ENCODE measurements at regions of chr22 and their contacts with region 1.

Region 1: GRCh38 chr22:20156611-20157429 is 6.0 kb upstream of the CCDC188 start:
- DNase-seq: peak; percentile 88
- ATAC-seq: peak; percentile 91
- H3K4me3 ChIP-seq: no peak overlapping the region
- H3K4me3 Mint-ChIP-seq: no peak overlapping the region
- H3K27ac ChIP-seq: no peak overlapping the region
- H3K27ac Mint-ChIP-seq: peak overlapping the region; percentile 10
- H3K4me1 ChIP-seq: peaks cover 0 to 3% of the 10 kb centered on the region in 2 donors
- H3K4me1 Mint-ChIP-seq: peaks cover 2% of the 10 kb centered on the region
- H3K27me3 ChIP-seq: peaks cover 0 to 40% (median 10%) of the 10 kb centered on the region in 4 experiments
- H3K27me3 Mint-ChIP-seq: peaks cover 10% of the 10 kb centered on the region
- CTCF ChIP-seq: peak; percentile 95

Region 2: GRCh38 chr22:19912271-19912999 is 244.4 kb before region 1 on chr22:
- CTCF ChIA-PET with region 1: no interaction called
- POLR2A ChIA-PET with region 1: no interaction called
- intact Hi-C with region 1: no loop called
- DNase-seq: no peak
- ATAC-seq: no peak
- H3K4me3 ChIP-seq: no peak overlapping the region
- H3K4me3 Mint-ChIP-seq: no peak overlapping the region
- H3K27ac ChIP-seq: no peak overlapping the region
- H3K27ac Mint-ChIP-seq: no peak overlapping the region
- H3K4me1 ChIP-seq: no peaks in the 10 kb centered on the region
- H3K4me1 Mint-ChIP-seq: peaks cover 1% of the 10 kb centered on the region
- H3K27me3 ChIP-seq: no peaks in the 10 kb centered on the region
- H3K27me3 Mint-ChIP-seq: no peaks in the 10 kb centered on the region
- CTCF ChIP-seq: no peak

Region 3: GRCh38 chr22:20174785-20175596 is 18.2 kb after region 1 on chr22:
- CTCF ChIA-PET with region 1: no interaction called
- POLR2A ChIA-PET with region 1: no interaction called
- intact Hi-C with region 1: no loop called
- DNase-seq: no peak
- ATAC-seq: no peak
- H3K4me3 ChIP-seq: no peak overlapping the region
- H3K4me3 Mint-ChIP-seq: no peak overlapping the region
- H3K27ac ChIP-seq: no peak overlapping the region
- H3K27ac Mint-ChIP-seq: no peak overlapping the region
- H3K4me1 ChIP-seq: no peaks in the 10 kb centered on the region
- H3K4me1 Mint-ChIP-seq: no peaks in the 10 kb centered on the region
- H3K27me3 ChIP-seq: no peaks in the 10 kb centered on the region
- H3K27me3 Mint-ChIP-seq: peaks cover 3% of the 10 kb centered on the region
- CTCF ChIP-seq: no peak

Region 4: DNA sequence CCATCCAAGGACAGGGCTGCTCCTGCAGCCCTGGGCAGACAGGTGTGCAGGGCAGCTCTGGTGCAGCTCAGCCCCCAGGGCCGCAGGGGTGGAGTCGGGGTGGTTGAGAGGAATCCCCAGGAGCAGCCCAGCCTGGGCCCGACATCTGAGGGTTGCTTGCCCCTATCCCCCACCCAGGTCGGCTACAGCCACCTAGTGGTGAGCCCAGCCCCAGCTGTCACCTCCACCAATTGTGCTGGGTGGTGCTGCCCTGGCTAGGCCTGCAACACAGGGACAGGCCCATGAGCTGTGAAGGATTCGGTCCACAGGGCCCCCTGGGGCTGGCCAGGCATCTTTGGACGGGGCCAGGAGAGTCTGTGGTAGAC is 81.7 kb after region 1 on chr22:
- CTCF ChIA-PET with region 1: interaction called, 19 read pairs
- POLR2A ChIA-PET with region 1: no interaction called
- intact Hi-C with region 1: no loop called
- DNase-seq: peak; percentile 69
- ATAC-seq: peak; percentile 85
- H3K4me3 ChIP-seq: peak overlapping the region in 1 of 5 experiments; percentile 25
- H3K4me3 Mint-ChIP-seq: peak overlapping the region; percentile 39
- H3K27ac ChIP-seq: peak overlapping the region in 1 of 2 donors; percentile 40
- H3K27ac Mint-ChIP-seq: peak overlapping the region; percentile 67
- H3K4me1 ChIP-seq: peaks cover 22 to 36% of the 10 kb centered on the region in 2 donors
- H3K4me1 Mint-ChIP-seq: peaks cover 21% of the 10 kb centered on the region
- H3K27me3 ChIP-seq: peaks cover 0 to 2% (median 0%) of the 10 kb centered on the region in 4 experiments
- H3K27me3 Mint-ChIP-seq: no peaks in the 10 kb centered on the region
- CTCF ChIP-seq: peak; percentile 53

Region 5: DNA sequence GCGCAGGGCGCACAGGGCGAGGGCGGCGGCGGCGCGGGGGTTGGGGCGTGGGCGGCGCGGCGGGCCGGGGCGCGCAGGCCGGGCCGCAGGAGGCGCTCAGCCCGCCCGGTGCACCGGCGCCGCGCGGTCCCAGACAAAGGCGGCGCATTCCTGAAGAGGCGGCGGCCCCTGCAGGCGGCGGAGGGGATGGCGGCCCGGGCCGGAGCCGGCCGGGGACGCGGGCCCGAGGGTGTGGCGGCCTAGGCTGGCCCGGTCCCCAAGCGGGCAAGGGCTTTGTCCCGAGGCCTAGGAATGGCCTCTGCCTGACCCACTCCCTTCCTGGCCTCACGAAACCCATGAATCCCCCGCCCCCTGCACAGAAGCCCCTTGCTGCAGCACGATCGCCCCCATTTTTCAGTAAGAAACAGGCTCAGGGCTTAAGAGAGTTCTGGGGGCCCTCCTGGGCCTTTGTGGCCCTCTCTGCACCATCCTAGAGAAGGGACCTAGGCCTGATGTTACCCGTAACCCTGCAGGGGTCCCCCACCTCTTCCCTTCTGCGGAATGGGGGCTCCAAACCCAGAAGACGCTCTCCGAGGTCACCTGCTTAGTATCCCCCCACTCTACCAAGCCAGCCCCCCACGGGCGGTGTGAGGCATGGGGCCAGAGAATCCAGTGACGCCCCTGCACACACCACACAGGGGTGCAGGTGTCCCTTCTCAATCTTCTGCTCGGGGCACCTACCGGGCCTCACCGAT is 111.6 kb after region 1 on chr22 and contains the start of gene RTN4R:
- CTCF ChIA-PET with region 1: interaction called, 10 read pairs
- POLR2A ChIA-PET with region 1: no interaction called
- intact Hi-C with region 1: loop called (anchors 1 kb)
- DNase-seq: peak; percentile 68
- ATAC-seq: peak; percentile 89
- H3K4me3 ChIP-seq: peak within 1 kb of the TSS in 2 of 5 experiments; percentile 25 to 33
- H3K4me3 Mint-ChIP-seq: peak within 1 kb of the TSS; percentile 75
- H3K27ac ChIP-seq: no peak within 1 kb of the TSS
- H3K27ac Mint-ChIP-seq: no peak within 1 kb of the TSS
- H3K4me1 ChIP-seq: peaks cover 8 to 14% of the 10 kb centered on the region in 2 donors
- H3K4me1 Mint-ChIP-seq: peaks cover 5% of the 10 kb centered on the region
- H3K27me3 ChIP-seq: peaks cover 0 to 9% (median 3%) of the 10 kb centered on the region in 4 experiments
- H3K27me3 Mint-ChIP-seq: peaks cover 3% of the 10 kb centered on the region
- CTCF ChIP-seq: peak; percentile 61
- total RNA-seq, gene RTN4R: 0.42 and 0.51 TPM in 2 replicates

Region 6: GRCh38 chr22:20283674-20284066 is 126.8 kb after region 1 on chr22:
- CTCF ChIA-PET with region 1: interaction called, 31 read pairs
- POLR2A ChIA-PET with region 1: no interaction called
- intact Hi-C with region 1: no loop called
- DNase-seq: no peak
- ATAC-seq: no peak
- H3K4me3 ChIP-seq: no peak overlapping the region
- H3K4me3 Mint-ChIP-seq: no peak overlapping the region
- H3K27ac ChIP-seq: no peak overlapping the region
- H3K27ac Mint-ChIP-seq: no peak overlapping the region
- H3K4me1 ChIP-seq: peaks cover 0 to 3% of the 10 kb centered on the region in 2 donors
- H3K4me1 Mint-ChIP-seq: peaks cover 4% of the 10 kb centered on the region
- H3K27me3 ChIP-seq: peaks cover 0 to 4% (median 0%) of the 10 kb centered on the region in 4 experiments
- H3K27me3 Mint-ChIP-seq: peaks cover 4% of the 10 kb centered on the region
- CTCF ChIP-seq: no peak

Region 7: GRCh38 chr22:20495861-20496681 is 339.3 kb after region 1 on chr22:
- CTCF ChIA-PET with region 1: no interaction called
- POLR2A ChIA-PET with region 1: no interaction called
- intact Hi-C with region 1: no loop called
- DNase-seq: peak; percentile 96
- ATAC-seq: peak; percentile 96
- H3K4me3 ChIP-seq: peak overlapping the region; percentile 75 to 85 (median 76)
- H3K4me3 Mint-ChIP-seq: peak overlapping the region; percentile 97
- H3K27ac ChIP-seq: peak overlapping the region; percentile 96 to 98
- H3K27ac Mint-ChIP-seq: peak overlapping the region; percentile 95
- H3K4me1 ChIP-seq: peaks cover 10 to 23% of the 10 kb centered on the region in 2 donors
- H3K4me1 Mint-ChIP-seq: peaks cover 26% of the 10 kb centered on the region
- H3K27me3 ChIP-seq: no peaks in the 10 kb centered on the region
- H3K27me3 Mint-ChIP-seq: no peaks in the 10 kb centered on the region
- CTCF ChIP-seq: peak; percentile 91